AG04449 (cell line): ENCODE measurements at regions of chr3 and their contacts with region 1.

Region 1: DNA sequence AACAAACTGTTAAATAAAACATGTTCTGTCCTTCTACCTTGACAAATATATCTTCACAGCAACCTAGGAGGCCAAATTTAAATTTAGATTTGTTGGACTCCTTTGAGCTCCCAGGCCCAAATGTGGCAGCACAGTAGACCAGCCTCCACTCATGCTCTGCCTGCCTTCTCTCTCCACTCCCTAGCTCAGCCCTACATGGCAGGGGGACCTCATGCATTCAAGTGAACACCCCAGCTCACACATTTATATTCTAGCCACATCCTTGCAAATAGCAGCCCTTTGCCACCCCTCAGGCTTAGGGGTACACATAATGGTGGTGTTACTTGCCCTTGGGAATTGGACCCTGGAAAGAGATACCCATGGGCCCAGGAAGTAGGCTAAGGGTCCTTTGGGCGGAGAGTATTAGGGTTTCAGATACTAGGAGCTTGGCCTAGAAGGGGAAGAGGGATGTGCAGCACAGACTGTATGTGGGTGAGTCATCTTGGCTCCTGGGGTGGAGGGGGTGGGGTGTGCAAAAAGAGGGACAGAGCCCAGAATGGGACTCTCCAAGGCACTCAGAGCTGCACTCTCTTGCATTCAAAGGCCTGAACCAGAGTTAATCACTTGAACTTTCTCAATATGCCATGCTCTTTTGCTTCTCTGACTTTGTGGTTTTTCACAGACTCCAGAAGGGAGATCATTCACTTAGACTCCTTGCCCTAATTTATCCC is 268.4 kb upstream of the ROPN1 start:
- DNase-seq: peak; percentile 49
- H3K4me3 ChIP-seq: no peak overlapping the region
- CTCF ChIP-seq: no peak

Region 2: DNA sequence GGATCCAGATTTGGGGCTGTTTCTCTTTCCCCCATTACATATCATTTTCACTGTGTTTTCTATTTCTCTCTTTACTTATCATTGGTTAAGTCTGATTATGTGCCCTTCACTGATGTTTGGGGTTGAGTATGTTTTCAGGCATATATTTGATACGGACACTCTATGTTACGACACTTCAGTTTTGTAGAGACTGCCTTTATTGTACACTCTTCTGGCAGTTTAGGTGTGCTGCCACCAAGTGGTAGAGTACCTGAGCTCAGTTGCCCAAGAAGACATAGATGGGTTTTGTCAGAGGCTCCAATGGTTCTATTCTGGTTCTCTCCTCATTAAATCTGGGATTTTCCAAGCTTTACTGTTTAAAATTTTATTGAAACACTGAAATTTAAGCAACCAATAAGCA is 13.4 kb before region 1 on chr3:
- CTCF ChIA-PET with region 1: interaction called, 30 read pairs
- POLR2A ChIA-PET with region 1: no interaction called
- DNase-seq: no peak
- H3K4me3 ChIP-seq: no peak overlapping the region
- CTCF ChIP-seq: peak; percentile 28

Region 3: DNA sequence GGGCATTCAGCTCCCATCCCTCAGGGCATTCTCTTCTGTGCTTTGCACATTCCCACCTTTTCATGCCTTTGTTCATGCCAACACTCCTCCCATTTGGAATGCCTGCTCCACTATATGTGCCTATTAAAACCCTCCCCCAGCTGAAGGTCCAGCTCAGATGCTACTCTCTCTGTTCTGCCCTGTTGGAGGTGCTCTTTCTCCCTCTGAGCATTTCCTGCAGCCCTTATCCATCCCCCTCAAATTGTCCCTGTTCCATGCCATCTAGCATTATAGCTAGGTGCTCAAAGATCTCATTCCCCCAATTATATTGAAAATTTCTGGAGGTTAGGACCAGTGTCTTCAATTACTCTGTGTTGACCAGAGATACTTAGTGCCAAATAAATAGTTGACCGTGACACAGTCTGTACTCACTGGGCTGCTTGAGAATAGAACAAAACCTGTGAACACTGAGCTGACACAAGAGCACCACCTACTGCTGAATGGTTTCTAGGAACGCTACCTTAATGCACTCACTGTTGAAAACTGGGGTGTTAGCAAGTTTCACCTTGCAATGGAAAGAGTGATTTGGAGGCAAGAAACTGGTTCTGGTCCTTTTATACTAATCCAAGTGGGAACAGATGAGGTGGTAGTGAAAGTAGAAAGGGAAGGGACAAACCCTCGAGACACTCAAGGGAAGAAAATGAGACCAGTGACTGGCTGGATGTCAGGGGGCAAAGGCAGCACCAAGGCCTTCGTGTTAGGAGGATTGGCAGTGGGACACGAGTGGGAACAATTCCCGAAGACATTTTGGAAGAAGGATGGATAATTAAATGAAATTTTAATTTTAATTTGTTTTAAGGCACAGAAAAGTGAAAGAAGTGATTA is 21.3 kb after region 1 on chr3:
- CTCF ChIA-PET with region 1: interaction called, 32 read pairs
- POLR2A ChIA-PET with region 1: no interaction called
- DNase-seq: no peak
- H3K4me3 ChIP-seq: no peak overlapping the region
- CTCF ChIP-seq: peak; percentile 58